Mammary epithelial cell (primary cell): ENCODE measurements at regions of chr14 and their contacts with region 1.

Region 1: GRCh38 chr14:59028476-59029202 is 159.8 kb upstream of the DAAM1 start:
- DNase-seq: peak; percentile 58
- H3K4me3 ChIP-seq: no peak overlapping the region
- H3K27ac ChIP-seq: no peak overlapping the region
- H3K4me1 ChIP-seq: no peaks in the 10 kb centered on the region
- H3K27me3 ChIP-seq: peaks cover 1% of the 10 kb centered on the region
- CTCF ChIP-seq: peak; percentile 89 to 97

Region 2: GRCh38 chr14:58992935-58993334 is 35.7 kb before region 1 on chr14:
- CTCF ChIA-PET with region 1: no interaction called
- dilution Hi-C with region 1: no loop called
- in situ Hi-C with region 1: no loop called
- intact Hi-C with region 1: no loop called
- DNase-seq: peak; percentile 24
- H3K4me3 ChIP-seq: no peak overlapping the region
- H3K27ac ChIP-seq: no peak overlapping the region
- H3K4me1 ChIP-seq: no peaks in the 10 kb centered on the region
- H3K27me3 ChIP-seq: no peaks in the 10 kb centered on the region
- CTCF ChIP-seq: no peak

Region 3: GRCh38 chr14:59055439-59056045 is 26.9 kb after region 1 on chr14:
- CTCF ChIA-PET with region 1: interaction called, 4 read pairs
- dilution Hi-C with region 1: no loop called
- in situ Hi-C with region 1: no loop called
- intact Hi-C with region 1: loop called (anchors 1 kb)
- DNase-seq: peak; percentile 31
- H3K4me3 ChIP-seq: no peak overlapping the region
- H3K27ac ChIP-seq: no peak overlapping the region
- H3K4me1 ChIP-seq: no peaks in the 10 kb centered on the region
- H3K27me3 ChIP-seq: no peaks in the 10 kb centered on the region
- CTCF ChIP-seq: peak; percentile 70 to 84

Region 4: GRCh38 chr14:59576332-59577294 is 548.0 kb after region 1 on chr14 and contains the start of gene CCDC175:
- CTCF ChIA-PET with region 1: no interaction called
- dilution Hi-C with region 1: no loop called
- in situ Hi-C with region 1: no loop called
- intact Hi-C with region 1: loop called (anchors 1 kb)
- DNase-seq: peak; percentile 46
- H3K4me3 ChIP-seq: peak within 1 kb of the TSS in 1 of 3 experiments; percentile 16
- H3K27ac ChIP-seq: no peak within 1 kb of the TSS
- H3K4me1 ChIP-seq: peaks cover 5% of the 10 kb centered on the region
- H3K27me3 ChIP-seq: peaks cover 4% of the 10 kb centered on the region
- CTCF ChIP-seq: peak; percentile 62 to 74
- total RNA-seq, gene CCDC175: not detected